CD8-positive, alpha-beta T cell (primary cell): ENCODE measurements at regions of chr5 and their contacts with region 1.

Region 1: GRCh38 chr5:111384220-111384619 is 128.1 kb downstream of the STARD4 start:
- DNase-seq: no peak
- ATAC-seq: no peak
- H3K4me3 ChIP-seq: no peak overlapping the region
- H3K4me3 Mint-ChIP-seq: no peak overlapping the region
- H3K27ac ChIP-seq: no peak overlapping the region
- H3K27ac Mint-ChIP-seq: no peak overlapping the region
- H3K4me1 ChIP-seq: no peaks in the 10 kb centered on the region
- H3K4me1 Mint-ChIP-seq: peaks cover 30% of the 10 kb centered on the region
- H3K27me3 ChIP-seq: no peaks in the 10 kb centered on the region
- H3K27me3 Mint-ChIP-seq: no peaks in the 10 kb centered on the region
- CTCF ChIP-seq: no peak

Region 2: DNA sequence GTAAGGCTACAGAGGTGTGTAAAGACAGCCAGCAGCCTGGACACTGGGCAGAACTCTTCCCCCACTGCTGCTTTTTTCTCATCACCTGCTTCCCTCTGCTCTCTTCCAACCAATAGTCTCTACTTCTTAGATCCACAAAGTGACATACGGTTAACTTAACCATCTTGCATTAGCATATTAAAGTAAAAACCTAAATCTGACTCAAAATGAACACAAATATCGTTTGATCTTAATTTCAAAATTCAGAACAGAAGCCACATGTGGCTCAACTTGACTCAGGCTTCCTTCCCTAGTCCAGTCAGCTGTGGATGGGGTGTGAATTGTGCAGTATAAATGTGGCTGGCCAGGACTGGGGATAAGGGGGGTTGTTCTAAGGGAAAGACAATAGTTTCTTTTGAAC is 13.8 kb after region 1 on chr5:
- CTCF ChIA-PET with region 1: interaction called, 4 read pairs
- POLR2A ChIA-PET with region 1: interaction called, 4 read pairs
- intact Hi-C with region 1: loop called in 1 of 2 experiments (anchors 2 kb)
- DNase-seq: no peak
- ATAC-seq: no peak
- H3K4me3 ChIP-seq: no peak overlapping the region
- H3K4me3 Mint-ChIP-seq: no peak overlapping the region
- H3K27ac ChIP-seq: no peak overlapping the region
- H3K27ac Mint-ChIP-seq: peak overlapping the region; percentile 25
- H3K4me1 ChIP-seq: no peaks in the 10 kb centered on the region
- H3K4me1 Mint-ChIP-seq: peaks cover 28% of the 10 kb centered on the region
- H3K27me3 ChIP-seq: no peaks in the 10 kb centered on the region
- H3K27me3 Mint-ChIP-seq: no peaks in the 10 kb centered on the region
- CTCF ChIP-seq: no peak

Region 3: GRCh38 chr5:111439473-111440075 is 55.4 kb after region 1 on chr5:
- CTCF ChIA-PET with region 1: no interaction called
- POLR2A ChIA-PET with region 1: no interaction called
- intact Hi-C with region 1: no loop called
- DNase-seq: no peak
- ATAC-seq: no peak
- H3K4me3 ChIP-seq: no peak overlapping the region
- H3K4me3 Mint-ChIP-seq: no peak overlapping the region
- H3K27ac ChIP-seq: no peak overlapping the region
- H3K27ac Mint-ChIP-seq: peak overlapping the region; percentile 25
- H3K4me1 ChIP-seq: no peaks in the 10 kb centered on the region
- H3K4me1 Mint-ChIP-seq: peaks cover 24% of the 10 kb centered on the region
- H3K27me3 ChIP-seq: no peaks in the 10 kb centered on the region
- H3K27me3 Mint-ChIP-seq: no peaks in the 10 kb centered on the region
- CTCF ChIP-seq: no peak